ENCODE measurements at regions of chr6 and their contacts with region 1.

Region 1: GRCh38 chr6:131015630-131016263 is 47.3 kb downstream of the EPB41L2 start:
- DNase-seq: no peak
- ATAC-seq: peak; percentile 63

Region 2: DNA sequence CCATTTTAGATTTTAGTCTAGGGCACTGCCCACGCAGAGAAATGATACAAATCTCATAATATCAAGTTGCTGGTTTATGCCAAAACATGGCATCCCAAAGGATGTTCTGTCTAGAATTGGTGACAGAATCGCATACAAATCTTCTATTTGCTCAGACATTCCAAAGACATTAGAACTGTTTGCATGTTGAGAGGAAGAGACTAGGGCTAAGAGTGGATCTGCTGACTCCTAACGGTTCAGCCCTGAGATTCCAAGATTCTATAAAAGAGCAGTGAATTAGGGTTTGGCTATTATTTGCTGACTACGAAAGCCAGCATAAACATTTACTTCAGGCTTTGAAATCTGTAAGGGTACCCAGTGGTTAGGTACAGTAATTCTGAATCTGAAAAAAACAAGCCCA is 43.7 kb after region 1 on chr6:
- intact Hi-C with region 1: loop called (anchors 5 kb)
- DNase-seq: no peak
- ATAC-seq: no peak

Region 3: DNA sequence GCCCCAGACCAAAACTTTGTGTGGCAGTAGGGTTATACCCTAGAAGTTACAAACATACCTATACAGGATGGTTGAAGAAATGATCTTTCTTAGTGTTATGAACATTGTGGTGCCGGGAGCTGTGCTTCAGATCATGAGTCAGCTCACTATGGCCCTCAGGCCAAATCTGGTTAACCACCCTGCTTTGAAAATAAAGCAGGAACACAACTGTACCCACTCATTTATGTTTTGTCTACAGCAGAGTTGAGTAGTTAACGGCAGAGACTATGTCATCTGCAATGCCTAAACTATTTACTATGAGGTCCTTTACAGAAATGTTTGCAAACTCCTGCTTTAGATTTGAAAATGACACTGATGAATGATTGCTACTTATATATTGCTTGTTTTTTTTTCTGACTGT is 143.9 kb after region 1 on chr6:
- intact Hi-C with region 1: no loop called
- DNase-seq: no peak
- ATAC-seq: no peak